AG04450 (cell line): ENCODE measurements at regions of chr11 and their contacts with region 1.

Region 1: GRCh38 chr11:105862736-105863367 is 159.2 kb downstream of the MSANTD4 start:
- DNase-seq: peak; percentile 13
- H3K4me3 ChIP-seq: no peak overlapping the region
- H3K27ac ChIP-seq: no peak overlapping the region
- H3K27me3 ChIP-seq: no peaks in the 10 kb centered on the region
- CTCF ChIP-seq: peak; percentile 76

Region 2: GRCh38 chr11:104609311-104610085 is 1253.4 kb before region 1 on chr11:
- CTCF ChIA-PET with region 1: interaction called, 24 read pairs
- POLR2A ChIA-PET with region 1: no interaction called
- DNase-seq: peak; percentile 38
- H3K4me3 ChIP-seq: no peak overlapping the region
- H3K27ac ChIP-seq: no peak overlapping the region
- H3K27me3 ChIP-seq: no peaks in the 10 kb centered on the region
- CTCF ChIP-seq: peak; percentile 87

Region 3: DNA sequence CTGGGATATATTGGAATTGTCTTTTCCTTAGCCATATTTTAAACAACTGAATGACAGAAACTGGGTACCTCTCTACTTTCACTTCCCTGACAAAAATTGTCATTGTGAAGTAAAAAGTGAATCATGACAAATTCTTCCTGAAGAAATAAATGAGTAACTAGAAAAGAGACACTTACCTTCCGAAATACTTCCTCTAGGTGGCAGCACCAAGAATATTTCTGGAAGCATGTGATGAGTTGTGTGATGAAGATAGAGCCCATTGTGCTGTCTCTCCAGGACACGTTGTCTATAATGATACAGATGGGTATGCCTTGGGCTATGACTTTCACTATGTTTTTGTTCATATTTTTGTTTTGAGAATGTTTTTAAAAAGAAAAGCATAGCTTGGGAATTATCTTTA is 915.9 kb before region 1 on chr11:
- CTCF ChIA-PET with region 1: interaction called, 13 read pairs
- POLR2A ChIA-PET with region 1: no interaction called
- DNase-seq: no peak
- H3K4me3 ChIP-seq: no peak overlapping the region
- H3K27ac ChIP-seq: no peak overlapping the region
- H3K27me3 ChIP-seq: no peaks in the 10 kb centered on the region
- CTCF ChIP-seq: peak; percentile 49

Region 4: DNA sequence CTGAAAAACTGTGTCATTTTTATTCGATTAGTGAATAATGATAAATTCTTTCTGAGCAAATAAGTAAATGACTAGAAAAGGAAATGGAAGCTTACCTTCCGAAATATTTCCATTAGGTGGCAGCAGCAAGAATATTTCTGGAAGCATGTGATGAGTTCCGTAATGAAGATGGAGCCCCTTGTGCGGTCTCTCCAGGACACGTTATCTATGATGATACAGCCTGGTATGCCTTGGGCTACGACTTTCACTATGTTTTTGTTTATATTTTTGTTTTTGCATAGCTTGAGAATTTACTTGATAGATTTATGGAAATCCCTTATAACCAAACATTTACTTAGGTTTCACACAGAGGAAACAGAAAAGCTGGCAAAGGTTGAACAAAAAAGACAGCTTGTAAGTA is 865.6 kb before region 1 on chr11:
- CTCF ChIA-PET with region 1: interaction called, 10 read pairs
- POLR2A ChIA-PET with region 1: no interaction called
- DNase-seq: no peak
- H3K4me3 ChIP-seq: no peak overlapping the region
- H3K27ac ChIP-seq: no peak overlapping the region
- H3K27me3 ChIP-seq: no peaks in the 10 kb centered on the region
- CTCF ChIP-seq: no peak

Region 5: DNA sequence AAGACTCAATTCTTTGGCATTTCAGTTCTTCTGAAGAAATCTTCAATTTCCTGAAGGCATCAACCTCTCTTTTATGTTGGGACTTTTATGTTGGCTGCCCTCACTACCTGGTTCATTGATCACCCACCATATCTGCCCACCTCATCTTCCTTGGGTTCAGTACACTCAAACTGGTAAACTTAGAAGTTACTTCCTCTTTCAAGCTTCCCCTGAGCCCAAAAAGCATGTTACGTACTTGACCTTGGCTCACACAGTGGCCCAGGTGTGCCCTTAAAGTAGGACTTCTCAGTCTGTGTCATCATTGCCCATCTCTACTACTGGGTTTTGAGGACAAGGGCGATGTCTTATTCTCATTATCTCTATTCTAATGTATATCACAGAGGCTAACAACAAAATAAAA is 166.9 kb before region 1 on chr11:
- CTCF ChIA-PET with region 1: no interaction called
- POLR2A ChIA-PET with region 1: no interaction called
- DNase-seq: no peak
- H3K4me3 ChIP-seq: no peak overlapping the region
- H3K27ac ChIP-seq: no peak overlapping the region
- H3K27me3 ChIP-seq: no peaks in the 10 kb centered on the region
- CTCF ChIP-seq: no peak

Region 6: DNA sequence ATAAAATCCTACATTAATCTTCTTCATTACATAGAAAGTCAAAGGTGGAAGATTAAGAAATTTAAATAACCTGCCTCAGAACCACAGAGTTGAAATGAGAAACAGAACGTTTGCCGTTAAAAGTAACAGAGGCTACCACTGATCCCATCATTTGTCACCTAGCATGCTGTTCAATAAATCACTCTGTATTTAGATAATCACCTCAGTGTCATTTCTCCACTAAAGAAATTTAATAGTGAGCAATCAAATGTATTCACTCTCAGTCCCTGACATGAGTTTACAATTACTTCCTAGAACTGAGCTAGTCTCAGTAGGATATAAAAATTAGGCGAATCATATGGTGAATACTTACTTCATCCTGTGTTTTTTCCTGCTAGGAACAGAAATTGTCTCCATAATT is 10.4 kb before region 1 on chr11:
- CTCF ChIA-PET with region 1: interaction called, 45 read pairs
- POLR2A ChIA-PET with region 1: no interaction called
- DNase-seq: no peak
- H3K4me3 ChIP-seq: no peak overlapping the region
- H3K27ac ChIP-seq: no peak overlapping the region
- H3K27me3 ChIP-seq: no peaks in the 10 kb centered on the region
- CTCF ChIP-seq: no peak

Region 7: DNA sequence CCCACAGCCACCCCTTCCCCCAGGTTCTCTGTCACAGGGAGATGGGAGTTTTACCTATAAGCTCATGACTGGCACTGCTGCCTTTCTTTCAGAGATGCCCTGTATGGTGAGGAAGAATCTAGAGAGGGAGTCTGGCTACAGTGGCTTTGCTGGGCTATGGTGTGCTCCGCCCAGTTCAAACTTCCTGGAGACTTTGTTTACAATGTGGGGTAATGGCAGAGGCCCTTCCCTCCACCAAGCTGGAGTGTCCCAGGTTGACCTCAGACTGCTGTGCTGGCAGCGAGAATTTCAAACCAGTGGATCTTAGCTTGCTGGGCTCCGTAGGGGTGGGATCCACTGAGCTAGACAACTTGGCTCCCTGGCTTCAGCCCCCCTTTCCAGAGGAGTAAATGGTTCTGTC is 15.7 kb after region 1 on chr11:
- CTCF ChIA-PET with region 1: interaction called, 10 read pairs
- POLR2A ChIA-PET with region 1: no interaction called
- DNase-seq: no peak
- H3K4me3 ChIP-seq: no peak overlapping the region
- H3K27ac ChIP-seq: no peak overlapping the region
- H3K27me3 ChIP-seq: no peaks in the 10 kb centered on the region
- CTCF ChIP-seq: no peak